Mammary epithelial cell (primary cell): ENCODE measurements at regions of chr16 and their contacts with region 1.

Region 1: GRCh38 chr16:49958448-49958847 is 66.6 kb upstream of the CNEP1R1 start:
- DNase-seq: no peak
- H3K4me3 ChIP-seq: no peak overlapping the region
- H3K27ac ChIP-seq: no peak overlapping the region
- H3K4me1 ChIP-seq: peaks cover 5% of the 10 kb centered on the region
- H3K27me3 ChIP-seq: no peaks in the 10 kb centered on the region
- CTCF ChIP-seq: no peak

Region 2: DNA sequence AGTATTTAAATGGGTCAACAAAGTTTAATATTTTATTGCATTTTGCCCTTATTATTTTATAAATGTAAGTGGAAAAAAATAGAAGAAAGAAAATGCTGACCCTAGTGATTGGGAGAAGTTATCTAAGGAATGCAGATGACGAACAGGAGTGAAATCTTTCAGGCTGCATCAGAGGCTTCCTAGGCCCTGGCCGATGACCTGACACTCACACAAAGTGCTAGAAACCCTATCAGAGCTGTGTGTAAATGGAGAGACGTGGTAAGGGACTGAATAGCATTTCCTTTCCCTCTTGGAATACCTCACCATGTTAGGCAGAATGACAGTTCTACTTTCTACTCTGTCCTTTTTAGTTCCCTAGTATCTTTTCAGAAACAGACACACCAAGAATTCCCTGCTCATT is 21.7 kb after region 1 on chr16:
- CTCF ChIA-PET with region 1: no interaction called
- dilution Hi-C with region 1: no loop called
- in situ Hi-C with region 1: no loop called
- intact Hi-C with region 1: no loop called
- DNase-seq: no peak
- H3K4me3 ChIP-seq: no peak overlapping the region
- H3K27ac ChIP-seq: no peak overlapping the region
- H3K4me1 ChIP-seq: no peaks in the 10 kb centered on the region
- H3K27me3 ChIP-seq: no peaks in the 10 kb centered on the region
- CTCF ChIP-seq: no peak

Region 3: GRCh38 chr16:50015631-50016030 is 57.2 kb after region 1 on chr16:
- CTCF ChIA-PET with region 1: interaction called, 10 read pairs
- dilution Hi-C with region 1: no loop called
- in situ Hi-C with region 1: no loop called
- intact Hi-C with region 1: no loop called
- DNase-seq: no peak
- H3K4me3 ChIP-seq: no peak overlapping the region
- H3K27ac ChIP-seq: no peak overlapping the region
- H3K4me1 ChIP-seq: no peaks in the 10 kb centered on the region
- H3K27me3 ChIP-seq: no peaks in the 10 kb centered on the region
- CTCF ChIP-seq: no peak

Region 4: DNA sequence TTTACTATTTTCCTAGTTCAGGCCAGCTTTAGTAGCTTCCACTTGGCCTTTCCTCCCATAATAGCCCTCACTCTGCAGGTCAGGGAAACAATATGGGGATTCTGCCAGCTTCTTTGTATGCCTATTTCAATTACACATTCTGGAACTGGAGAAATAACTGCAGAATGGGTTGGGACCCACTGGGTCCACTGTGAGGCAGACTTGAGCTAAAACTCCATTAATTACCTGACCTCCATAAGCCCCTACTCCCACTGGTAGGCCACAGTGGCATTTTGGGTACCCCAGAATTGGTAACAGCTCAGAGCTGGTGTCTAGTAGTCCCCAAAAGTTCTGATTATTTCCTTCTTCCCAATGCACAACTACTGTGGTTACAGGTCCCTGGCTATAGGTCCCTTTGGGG is 178.0 kb after region 1 on chr16:
- CTCF ChIA-PET with region 1: no interaction called
- dilution Hi-C with region 1: no loop called
- in situ Hi-C with region 1: no loop called
- intact Hi-C with region 1: no loop called
- DNase-seq: no peak
- H3K4me3 ChIP-seq: no peak overlapping the region
- H3K27ac ChIP-seq: no peak overlapping the region
- H3K4me1 ChIP-seq: no peaks in the 10 kb centered on the region
- H3K27me3 ChIP-seq: peaks cover 1% of the 10 kb centered on the region
- CTCF ChIP-seq: no peak